ENCODE measurements at regions of chr1 and their contacts with region 1.

Region 1: GRCh38 chr1:169348383-169349036 is 19.1 kb downstream of the NME7 start:
- DNase-seq: peak in 1 of 2 donors; percentile 86
- H3K4me3 ChIP-seq: no peak overlapping the region
- H3K27ac ChIP-seq: no peak overlapping the region
- H3K4me1 ChIP-seq: peaks cover 0 to 13% (median 2%) of the 10 kb centered on the region in 4 donors
- H3K27me3 ChIP-seq: no peaks in the 10 kb centered on the region
- CTCF ChIP-seq: peak in 5 of 7 experiments; percentile 53 to 83 (median 79)
- EP300 ChIP-seq: no peak
- POLR2A ChIP-seq: no peak

Region 2: DNA sequence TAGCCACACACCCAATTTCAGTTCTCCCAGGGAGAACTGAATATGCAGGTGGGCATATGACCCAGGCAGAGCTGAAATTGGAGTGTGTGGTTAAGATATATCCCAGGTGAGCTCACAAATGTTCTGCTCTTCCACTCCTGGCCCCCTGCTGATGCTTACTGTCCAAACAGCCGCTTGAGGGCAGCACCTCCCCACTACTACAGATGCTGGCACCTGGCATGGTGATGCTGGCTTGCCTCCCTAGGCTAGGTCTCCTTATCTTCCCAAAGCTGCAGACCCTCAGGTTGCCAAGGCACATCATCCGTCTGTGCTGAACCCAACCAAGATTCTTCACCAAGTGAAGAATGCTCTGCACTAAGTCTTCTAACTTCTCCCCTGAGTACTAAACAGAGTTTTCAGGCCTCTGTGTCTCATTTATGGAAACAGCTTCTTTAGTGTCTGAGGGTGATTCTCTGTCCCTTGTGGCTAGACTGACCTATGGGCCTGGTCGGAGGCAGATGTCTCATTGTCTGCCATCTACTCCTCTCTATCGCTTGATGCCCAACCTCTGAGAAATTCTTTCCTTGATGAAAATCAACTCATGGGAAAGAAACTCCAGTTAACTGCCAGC is 744.9 kb before region 1 on chr1:
- intact Hi-C with region 1: loop called (anchors 10 kb)
- DNase-seq: peak; percentile 83 to 93
- H3K4me3 ChIP-seq: no peak overlapping the region
- H3K27ac ChIP-seq: no peak overlapping the region
- H3K4me1 ChIP-seq: peaks cover 0 to 32% (median 9%) of the 10 kb centered on the region in 4 donors
- H3K27me3 ChIP-seq: no peaks in the 10 kb centered on the region
- CTCF ChIP-seq: peak in 5 of 7 experiments; percentile 72 to 84 (median 75)
- EP300 ChIP-seq: no peak
- POLR2A ChIP-seq: no peak

Measured in stomach (tissue), 19 donors.